ENCODE measurements at regions of chr5 and their contacts with region 1.

Region 1: GRCh38 chr5:179678223-179679013 is 2.4 kb downstream of the CBY3 start:
- DNase-seq: peak; percentile 80 to 94
- H3K4me3 ChIP-seq: peak overlapping the region; percentile 69
- H3K27ac ChIP-seq: peak overlapping the region; percentile 18; the same call in 1 of the 2 replicates
- H3K4me1 ChIP-seq: peaks cover 31% of the 10 kb centered on the region
- H3K27me3 ChIP-seq: no peaks in the 10 kb centered on the region
- CTCF ChIP-seq: no peak

Region 2: DNA sequence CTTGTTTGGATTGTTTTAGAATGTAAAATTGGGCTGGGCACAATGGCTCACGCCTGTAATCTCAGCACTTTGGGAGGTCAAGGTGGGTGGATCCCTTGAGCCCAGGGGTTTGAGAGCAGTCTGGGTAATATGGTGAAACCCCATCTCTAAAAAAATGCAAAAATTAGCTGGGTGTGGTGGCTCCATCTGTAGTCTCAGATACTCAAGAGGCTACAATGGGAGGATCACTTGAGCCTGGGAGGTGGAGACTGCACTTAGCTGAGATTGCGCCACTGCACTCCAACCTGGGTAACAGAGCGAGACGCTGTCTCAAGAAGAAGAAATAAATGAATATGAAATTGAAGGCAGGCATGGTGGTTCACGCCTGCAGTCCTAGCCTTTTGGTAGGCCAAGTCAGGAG is 75.6 kb after region 1 on chr5:
- CTCF ChIA-PET with region 1: no interaction called
- POLR2A ChIA-PET with region 1: interaction called, 26 read pairs
- intact Hi-C with region 1: no loop called
- DNase-seq: no peak
- H3K4me3 ChIP-seq: no peak overlapping the region
- H3K27ac ChIP-seq: no peak overlapping the region
- H3K4me1 ChIP-seq: peaks cover under 1% of the 10 kb centered on the region; the same call in 1 of the 2 replicates
- H3K27me3 ChIP-seq: no peaks in the 10 kb centered on the region
- CTCF ChIP-seq: no peak

Measured in PC-9 (cell line).